Motor neuron (in vitro differentiated cells): ENCODE measurements at regions of chr11 and their contacts with region 1.

Region 1: DNA sequence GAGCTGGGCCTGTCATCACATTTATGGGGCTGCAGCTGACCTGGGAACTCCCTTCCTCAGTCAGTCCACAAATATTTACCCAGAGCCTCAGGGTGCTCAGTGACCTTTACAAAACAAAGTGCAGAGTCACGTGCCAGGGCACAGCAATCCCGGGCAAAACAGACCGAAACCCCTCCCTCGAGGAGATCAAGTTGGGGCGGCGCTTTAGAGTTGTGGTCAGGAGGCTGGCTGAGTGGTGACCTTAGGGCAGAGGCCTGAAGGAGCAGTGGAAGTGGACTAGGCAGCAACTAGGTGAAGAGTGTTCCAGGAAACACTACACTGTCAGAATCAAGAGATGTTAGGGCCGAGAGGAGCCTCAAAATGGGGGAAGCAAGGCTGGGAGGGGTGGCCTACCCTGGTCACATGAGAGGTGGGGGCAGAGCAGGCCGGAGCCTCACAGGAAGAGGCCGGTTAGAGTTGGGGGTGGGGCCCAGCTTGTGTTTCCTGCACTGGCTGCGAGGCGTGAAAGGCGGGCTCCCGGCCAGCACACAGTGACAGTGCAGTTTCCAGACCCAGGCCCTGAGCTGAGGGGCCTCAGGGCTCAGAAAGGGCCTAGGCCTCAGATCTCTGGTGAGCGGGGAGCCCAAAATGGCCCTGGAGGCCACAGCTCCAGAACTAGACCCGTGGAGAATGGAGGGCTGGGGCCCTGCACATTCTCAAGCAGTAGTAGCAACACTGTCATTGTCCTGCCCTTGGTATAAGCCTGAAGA is 3.7 kb upstream of the NEAT1 start:
- ATAC-seq: peak; percentile 10 to 62 (median 54)
- H3K4me3 ChIP-seq: peak overlapping the region; percentile 9 to 32 (median 24)
- H3K27ac ChIP-seq: peak overlapping the region; percentile 94 to 97
- H3K4me1 ChIP-seq: peaks cover 45 to 61% of the 10 kb centered on the region in 2 donors

Region 2: DNA sequence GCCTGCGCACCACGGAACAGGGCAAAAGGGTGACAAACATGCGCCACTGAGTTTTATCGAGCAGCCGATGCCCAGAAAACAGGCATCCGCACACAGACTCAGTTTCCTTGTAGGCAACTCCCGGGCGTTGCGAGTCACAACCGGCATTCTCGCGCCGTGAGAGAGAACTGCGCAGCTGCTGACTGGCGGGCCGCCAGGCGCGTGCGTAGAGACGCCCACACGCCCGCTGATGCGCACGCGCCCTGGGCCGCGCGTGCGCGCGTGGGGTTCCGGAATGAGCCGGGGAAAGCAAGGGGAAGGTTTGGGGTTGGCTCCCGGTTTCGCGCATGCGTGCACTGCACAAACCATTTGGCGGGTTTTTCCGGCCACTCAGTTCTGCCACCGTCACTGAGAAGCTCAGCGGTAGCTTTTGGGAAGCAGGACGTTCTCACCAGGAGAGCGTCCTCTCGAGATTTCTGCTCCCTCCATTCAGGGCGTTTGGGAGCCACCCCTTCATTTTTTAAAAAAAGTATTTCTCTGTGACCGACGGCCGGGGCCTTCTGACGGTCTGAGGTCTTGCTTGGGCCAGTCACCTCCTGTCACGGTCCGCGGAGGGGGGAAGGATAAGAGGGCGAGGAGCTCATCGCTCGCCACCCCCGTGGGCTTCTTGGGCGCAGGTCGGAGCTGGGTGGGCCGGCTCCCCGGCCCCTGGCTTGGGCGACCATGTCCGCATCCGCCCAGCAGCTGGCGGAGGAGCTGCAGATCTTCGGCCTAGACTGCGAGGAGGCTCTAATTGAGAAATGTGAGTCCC is 157.1 kb before region 1 on chr11 and contains the start of gene POLA2:
- in situ Hi-C with region 1: no loop called
- ATAC-seq: peak; percentile 89 to 96 (median 94)
- H3K4me3 ChIP-seq: peak within 1 kb of the TSS; percentile 50 to 83 (median 69)
- H3K27ac ChIP-seq: peak within 1 kb of the TSS in 1 of 2 donors; percentile 66
- H3K4me1 ChIP-seq: peaks cover 4 to 8% of the 10 kb centered on the region in 2 donors
- total RNA-seq, gene POLA2: 2.9 to 22.0 (median 6.0) TPM

Region 3: DNA sequence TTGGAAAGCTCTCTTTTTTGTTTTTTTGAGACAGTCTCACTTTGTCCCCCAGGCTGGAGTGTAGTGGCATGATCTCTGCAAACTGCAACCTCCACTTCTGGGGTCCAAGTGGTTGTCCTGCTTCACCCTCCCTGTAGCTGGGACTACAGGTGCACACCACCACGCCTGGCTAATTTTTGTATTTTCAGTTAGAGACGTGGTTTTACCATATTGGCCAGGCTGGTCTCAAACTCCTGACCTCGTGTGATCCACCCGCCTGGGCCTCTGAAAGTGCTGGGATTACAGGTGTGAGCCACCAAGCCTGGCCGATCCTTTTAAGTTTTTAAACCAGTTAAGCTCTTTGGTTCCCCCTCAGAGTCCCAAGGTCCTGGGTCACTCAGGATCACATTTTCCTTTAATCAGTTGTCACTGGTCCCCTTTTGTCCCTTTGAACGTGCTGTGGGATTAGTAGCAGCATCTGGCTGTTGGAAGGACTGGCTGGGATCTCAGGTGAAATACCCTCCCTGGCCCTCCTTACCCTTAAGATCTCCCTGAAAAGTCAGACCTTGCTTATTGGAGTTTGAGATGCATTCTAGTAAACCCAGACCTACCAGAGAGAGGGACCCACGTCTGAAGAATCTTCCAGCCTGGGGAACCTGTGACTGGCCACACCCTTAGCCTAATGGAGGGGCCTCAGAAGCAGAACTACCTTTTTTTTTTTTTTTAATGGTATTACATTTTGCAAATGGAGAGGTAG is 88.1 kb after region 1 on chr11:
- in situ Hi-C with region 1: loop called in 8 of 9 experiments (anchors 5 to 25 kb)
- ATAC-seq: peak; percentile 8 to 41 (median 34)
- H3K4me3 ChIP-seq: peak overlapping the region; percentile 50 to 89 (median 60)
- H3K27ac ChIP-seq: peak overlapping the region; percentile 10 to 28
- H3K4me1 ChIP-seq: peaks cover 0 to 6% of the 10 kb centered on the region in 2 donors